Endothelial cell of umbilical vein (primary cell): ENCODE measurements at regions of chr2 and their contacts with region 1.

Region 1: GRCh38 chr2:40244675-40245074 is 207.2 kb downstream of the SLC8A1 start:
- DNase-seq: peak; percentile 71
- H3K4me3 ChIP-seq: no peak overlapping the region
- H3K27ac ChIP-seq: no peak overlapping the region
- H3K4me1 ChIP-seq: peaks cover 5% of the 10 kb centered on the region
- H3K27me3 ChIP-seq: no peaks in the 10 kb centered on the region
- CTCF ChIP-seq: peak; percentile 47 to 64
- POLR2A ChIP-seq: no peak

Region 2: GRCh38 chr2:40554668-40555285 is 310.1 kb after region 1 on chr2:
- CTCF ChIA-PET with region 1: interaction called, 70 read pairs
- POLR2A ChIA-PET with region 1: no interaction called
- dilution Hi-C with region 1: no loop called
- intact Hi-C with region 1: loop called (anchors 1 kb)
- DNase-seq: peak; percentile 69
- H3K4me3 ChIP-seq: no peak overlapping the region
- H3K27ac ChIP-seq: no peak overlapping the region
- H3K4me1 ChIP-seq: no peaks in the 10 kb centered on the region
- H3K27me3 ChIP-seq: no peaks in the 10 kb centered on the region
- CTCF ChIP-seq: peak; percentile 70 to 80
- POLR2A ChIP-seq: no peak

Region 3: GRCh38 chr2:40760071-40760666 is 515.5 kb after region 1 on chr2:
- CTCF ChIA-PET with region 1: interaction called, 5 read pairs
- POLR2A ChIA-PET with region 1: no interaction called
- dilution Hi-C with region 1: no loop called
- intact Hi-C with region 1: loop called (anchors 1 kb)
- DNase-seq: peak; percentile 45
- H3K4me3 ChIP-seq: no peak overlapping the region
- H3K27ac ChIP-seq: no peak overlapping the region
- H3K4me1 ChIP-seq: no peaks in the 10 kb centered on the region
- H3K27me3 ChIP-seq: no peaks in the 10 kb centered on the region
- CTCF ChIP-seq: peak; percentile 48 to 49
- POLR2A ChIP-seq: no peak

Region 4: DNA sequence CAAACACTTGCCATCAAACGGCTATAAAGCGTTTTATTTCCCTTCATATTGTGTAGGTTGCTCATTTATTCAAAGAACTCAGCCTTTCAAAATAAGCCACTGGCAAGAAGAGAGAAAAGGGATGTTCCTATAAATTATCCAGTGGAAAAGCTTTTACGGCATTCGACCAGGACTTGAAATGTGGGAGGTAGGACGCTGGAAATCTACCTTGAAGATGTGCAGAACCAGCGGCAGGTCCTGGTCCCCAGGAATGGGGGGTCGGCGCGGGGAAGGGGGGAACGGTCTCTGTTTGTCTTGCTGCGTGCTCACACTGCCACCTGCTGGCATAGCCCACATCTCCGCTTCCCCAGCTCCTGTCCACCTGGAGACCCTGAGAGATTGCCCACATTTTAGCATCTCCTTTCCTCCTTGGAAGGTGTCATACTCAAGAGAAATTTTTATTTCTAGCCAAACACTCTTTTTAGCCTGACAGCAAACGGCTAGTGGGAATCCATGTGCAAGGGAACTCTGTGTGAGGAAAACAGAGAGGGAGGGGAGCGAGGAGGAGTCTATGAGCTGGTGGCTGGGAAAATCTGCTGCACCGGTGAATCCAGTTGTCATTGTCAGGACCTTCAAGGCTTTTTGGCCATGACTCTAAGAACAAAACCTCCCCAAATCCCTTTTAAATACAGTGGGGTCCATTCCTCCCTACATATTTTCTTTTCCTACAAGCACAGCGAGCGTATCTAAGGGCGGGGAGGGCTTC is 1454.2 kb after region 1 on chr2:
- CTCF ChIA-PET with region 1: interaction called, 18 read pairs
- POLR2A ChIA-PET with region 1: no interaction called
- dilution Hi-C with region 1: no loop called
- intact Hi-C with region 1: no loop called
- DNase-seq: peak; percentile 21
- H3K4me3 ChIP-seq: no peak overlapping the region
- H3K27ac ChIP-seq: no peak overlapping the region
- H3K4me1 ChIP-seq: no peaks in the 10 kb centered on the region
- H3K27me3 ChIP-seq: no peaks in the 10 kb centered on the region
- CTCF ChIP-seq: peak; percentile 55 to 84
- POLR2A ChIP-seq: no peak

Region 5: DNA sequence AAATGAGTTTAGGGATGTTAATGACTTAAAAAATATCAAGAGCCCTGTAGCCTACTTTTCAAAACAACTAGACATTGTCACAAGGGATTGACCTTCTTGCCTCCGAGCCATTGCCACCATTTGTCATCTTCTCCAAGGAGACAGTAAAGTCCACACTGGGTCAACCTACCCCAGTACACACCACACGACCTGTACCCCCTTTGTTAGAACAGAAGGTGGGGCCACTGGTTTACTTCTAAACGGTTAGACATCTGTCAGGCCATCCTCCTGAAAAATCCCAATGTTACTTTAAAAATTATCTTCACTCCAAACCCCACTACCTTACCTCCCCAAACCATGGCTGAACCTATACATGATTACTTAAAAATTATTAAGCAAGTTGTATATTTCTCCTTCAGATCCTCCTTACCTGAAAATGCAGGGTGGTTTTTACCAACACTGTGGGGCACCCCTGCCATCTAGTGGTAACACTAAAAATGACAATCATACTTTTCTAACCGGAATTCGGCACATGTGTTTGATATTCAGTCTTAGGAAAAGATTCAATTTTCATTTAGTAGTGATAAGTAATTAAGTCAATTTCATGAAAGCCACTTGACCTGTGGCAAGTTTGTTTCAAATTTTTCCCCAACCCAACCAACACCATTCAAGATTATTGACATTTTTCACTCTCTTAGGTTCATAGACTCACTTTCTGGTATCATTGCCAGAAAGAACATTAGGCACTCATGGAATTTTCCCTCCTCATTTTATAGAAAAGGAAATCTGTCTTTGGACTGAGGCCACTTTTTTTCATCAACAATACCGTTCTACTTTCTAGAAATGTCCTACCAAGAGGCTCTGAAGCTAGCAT is 1537.9 kb after region 1 on chr2:
- CTCF ChIA-PET with region 1: no interaction called
- POLR2A ChIA-PET with region 1: no interaction called
- dilution Hi-C with region 1: no loop called
- intact Hi-C with region 1: loop called (anchors 1 kb)
- DNase-seq: peak; percentile 60
- H3K4me3 ChIP-seq: no peak overlapping the region
- H3K27ac ChIP-seq: no peak overlapping the region
- H3K4me1 ChIP-seq: no peaks in the 10 kb centered on the region
- H3K27me3 ChIP-seq: peaks cover 0 to 3% of the 10 kb centered on the region in 2 experiments
- CTCF ChIP-seq: peak; percentile 42 to 52
- POLR2A ChIP-seq: no peak